ENCODE measurements at regions of chr7 and their contacts with region 1.

Region 1: GRCh38 chr7:44847508-44847920 is 373 bp downstream of the H2AZ2 start:
- DNase-seq: peak; percentile 93
- ATAC-seq: peak; percentile 70
- H3K4me3 Mint-ChIP-seq: peak overlapping the region; percentile 95
- H3K27ac Mint-ChIP-seq: peak overlapping the region; percentile 97
- H3K4me1 Mint-ChIP-seq: peaks cover 38% of the 10 kb centered on the region
- H3K27me3 Mint-ChIP-seq: no peaks in the 10 kb centered on the region

Region 2: GRCh38 chr7:44044315-44045225 is 802.9 kb before region 1 on chr7 and contains the start of gene DBNL:
- CTCF ChIA-PET with region 1: no interaction called
- POLR2A ChIA-PET with region 1: no interaction called
- intact Hi-C with region 1: loop called in 1 of 2 experiments (anchors 2 kb)
- DNase-seq: peak; percentile 95
- ATAC-seq: peak; percentile 72
- H3K4me3 Mint-ChIP-seq: peak within 1 kb of the TSS; percentile 88
- H3K27ac Mint-ChIP-seq: peak within 1 kb of the TSS; percentile 93
- H3K4me1 Mint-ChIP-seq: peaks cover 52% of the 10 kb centered on the region
- H3K27me3 Mint-ChIP-seq: no peaks in the 10 kb centered on the region
- total RNA-seq, gene DBNL: 106 to 117 TPM

Region 3: DNA sequence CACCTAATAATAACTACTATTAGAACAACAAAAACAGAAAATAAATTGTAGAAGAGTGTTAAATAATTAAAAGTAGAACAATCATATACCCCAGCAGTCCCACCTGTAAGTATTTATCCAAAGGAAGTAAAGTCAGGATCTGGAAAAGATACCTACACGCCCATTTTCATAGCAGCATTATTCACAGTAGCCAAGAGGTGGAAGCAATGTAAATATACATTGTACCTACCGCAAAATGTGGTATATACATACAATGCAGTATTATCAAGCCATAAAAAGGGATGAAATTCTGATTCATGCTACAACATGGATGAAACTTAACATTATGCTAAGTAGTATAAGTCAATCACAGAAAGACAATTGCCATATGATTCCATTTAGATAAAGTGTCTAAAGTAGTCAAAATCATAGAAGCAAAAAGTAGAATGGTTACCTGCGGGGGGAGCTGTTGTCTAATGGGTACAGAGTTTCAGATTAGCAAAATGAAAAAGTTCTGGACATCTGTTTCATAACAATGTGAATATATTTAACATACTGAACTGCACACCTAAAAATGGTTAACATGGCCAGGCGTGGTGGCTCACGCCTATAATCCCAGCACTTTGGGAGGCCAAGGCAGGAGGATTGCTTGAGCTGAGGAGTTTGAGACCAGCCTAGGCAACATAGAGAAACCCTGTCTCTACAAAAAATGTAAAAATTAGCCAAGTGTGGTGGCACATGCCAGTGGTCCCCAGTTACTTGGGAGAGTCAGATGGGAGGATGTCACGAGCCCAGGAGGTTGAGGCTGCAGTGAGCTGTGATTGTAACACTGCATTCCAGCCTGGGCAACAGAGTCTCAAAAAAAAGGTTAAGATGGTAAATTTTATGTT is 259.4 kb before region 1 on chr7:
- CTCF ChIA-PET with region 1: interaction called, 5 read pairs
- POLR2A ChIA-PET with region 1: no interaction called
- intact Hi-C with region 1: loop called (anchors 1 to 2 kb)
- DNase-seq: peak; percentile 75
- ATAC-seq: peak; percentile 89
- H3K4me3 Mint-ChIP-seq: no peak overlapping the region
- H3K27ac Mint-ChIP-seq: peak overlapping the region; percentile 31
- H3K4me1 Mint-ChIP-seq: peaks cover 8% of the 10 kb centered on the region
- H3K27me3 Mint-ChIP-seq: no peaks in the 10 kb centered on the region

Region 4: GRCh38 chr7:44748045-44748947 is 99.2 kb before region 1 on chr7 and contains the start of gene ZMIZ2:
- CTCF ChIA-PET with region 1: no interaction called
- POLR2A ChIA-PET with region 1: interaction called, 3 read pairs
- intact Hi-C with region 1: loop called (anchors 1 to 2 kb)
- DNase-seq: peak; percentile 97
- ATAC-seq: peak; percentile 87
- H3K4me3 Mint-ChIP-seq: peak within 1 kb of the TSS; percentile 78
- H3K27ac Mint-ChIP-seq: peak within 1 kb of the TSS; percentile 97
- H3K4me1 Mint-ChIP-seq: peaks cover 31% of the 10 kb centered on the region
- H3K27me3 Mint-ChIP-seq: no peaks in the 10 kb centered on the region
- total RNA-seq, gene ZMIZ2: 82.8 to 106 TPM

Region 5: DNA sequence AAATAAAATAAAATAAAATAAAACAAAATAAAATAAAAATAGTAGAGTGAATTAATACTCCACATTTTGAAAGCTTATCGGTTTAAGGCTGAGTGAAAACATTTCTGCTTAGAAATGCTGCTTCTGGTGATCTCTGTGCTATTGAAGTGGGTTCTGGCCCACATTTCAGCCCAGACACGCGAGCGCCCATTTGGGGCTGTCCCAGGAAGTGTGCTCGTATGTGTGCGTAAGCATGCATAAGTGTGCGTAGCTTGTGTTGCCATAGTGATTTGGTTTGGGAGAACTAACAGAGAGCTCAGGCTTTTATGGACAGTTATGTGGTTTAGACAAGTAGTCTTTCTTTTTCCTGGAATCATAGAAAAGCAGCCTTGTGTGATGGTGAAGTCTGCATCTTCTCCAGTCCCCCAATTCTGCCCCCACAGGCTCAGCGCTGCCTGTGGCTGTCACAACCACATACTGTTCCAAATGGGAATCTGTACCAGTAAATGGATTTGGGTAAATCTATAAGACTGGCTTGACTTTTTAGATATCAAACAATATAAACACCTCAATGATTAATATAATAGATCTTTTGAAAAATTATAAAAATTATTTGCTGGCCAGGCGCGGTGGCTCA is 67.6 kb after region 1 on chr7:
- CTCF ChIA-PET with region 1: interaction called, 11 read pairs
- POLR2A ChIA-PET with region 1: interaction called, 8 read pairs
- intact Hi-C with region 1: loop called in 1 of 2 experiments (anchors 2 kb)
- DNase-seq: peak; percentile 87
- ATAC-seq: peak; percentile 99
- H3K4me3 Mint-ChIP-seq: peak overlapping the region; percentile 3
- H3K27ac Mint-ChIP-seq: peak overlapping the region; percentile 73
- H3K4me1 Mint-ChIP-seq: peaks cover 23% of the 10 kb centered on the region
- H3K27me3 Mint-ChIP-seq: no peaks in the 10 kb centered on the region

Region 6: DNA sequence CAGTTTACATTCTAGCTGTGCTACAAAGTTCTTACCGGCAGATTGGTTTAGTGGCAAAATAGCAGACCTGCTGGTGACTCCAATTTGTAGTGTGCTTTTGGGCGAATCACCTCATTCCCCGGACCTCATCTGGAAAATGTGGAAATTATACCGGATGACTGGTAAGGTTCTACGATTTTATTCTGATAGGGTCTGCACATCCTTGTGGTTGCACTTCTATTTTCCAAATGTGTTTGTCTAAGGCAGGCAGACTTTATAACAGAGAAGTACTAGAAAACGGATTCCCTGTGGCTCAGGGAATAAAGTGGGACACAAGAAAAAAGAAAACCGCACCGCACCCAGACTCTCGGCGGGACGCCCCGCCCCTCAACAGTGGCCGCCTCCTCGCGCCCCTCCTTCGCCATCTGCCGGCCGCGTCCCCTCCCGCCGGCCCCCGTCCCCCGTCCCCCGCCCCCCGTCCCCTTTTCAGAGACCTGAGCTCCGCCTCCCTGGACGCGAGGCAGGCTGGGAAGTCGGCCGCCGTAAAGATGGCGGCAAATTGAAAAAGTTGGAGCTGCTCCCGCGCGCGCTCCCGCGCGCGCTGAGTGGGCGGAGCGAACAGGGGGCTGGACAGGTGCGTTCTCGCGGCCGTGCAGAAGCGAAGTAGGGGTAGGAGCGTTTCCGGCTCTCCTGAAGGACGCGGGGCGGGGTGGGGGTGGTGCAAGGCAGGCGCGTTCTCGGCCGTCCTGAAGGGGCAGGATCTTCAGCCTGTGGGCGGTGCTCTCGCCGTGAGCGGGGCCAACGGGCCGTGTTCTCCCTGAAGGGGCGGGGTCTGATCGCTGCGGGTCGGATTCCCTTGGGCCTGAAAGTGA is 152.0 kb after region 1 on chr7:
- CTCF ChIA-PET with region 1: interaction called, 3 read pairs
- POLR2A ChIA-PET with region 1: interaction called, 3 read pairs
- intact Hi-C with region 1: loop called in 1 of 2 experiments (anchors 1 kb)
- DNase-seq: peak; percentile 100
- ATAC-seq: peak; percentile 88
- H3K4me3 Mint-ChIP-seq: peak overlapping the region; percentile 91
- H3K27ac Mint-ChIP-seq: peak overlapping the region; percentile 91
- H3K4me1 Mint-ChIP-seq: peaks cover 56% of the 10 kb centered on the region
- H3K27me3 Mint-ChIP-seq: no peaks in the 10 kb centered on the region